ENCODE measurements at regions of chr7 and their contacts with region 1.

Region 1: DNA sequence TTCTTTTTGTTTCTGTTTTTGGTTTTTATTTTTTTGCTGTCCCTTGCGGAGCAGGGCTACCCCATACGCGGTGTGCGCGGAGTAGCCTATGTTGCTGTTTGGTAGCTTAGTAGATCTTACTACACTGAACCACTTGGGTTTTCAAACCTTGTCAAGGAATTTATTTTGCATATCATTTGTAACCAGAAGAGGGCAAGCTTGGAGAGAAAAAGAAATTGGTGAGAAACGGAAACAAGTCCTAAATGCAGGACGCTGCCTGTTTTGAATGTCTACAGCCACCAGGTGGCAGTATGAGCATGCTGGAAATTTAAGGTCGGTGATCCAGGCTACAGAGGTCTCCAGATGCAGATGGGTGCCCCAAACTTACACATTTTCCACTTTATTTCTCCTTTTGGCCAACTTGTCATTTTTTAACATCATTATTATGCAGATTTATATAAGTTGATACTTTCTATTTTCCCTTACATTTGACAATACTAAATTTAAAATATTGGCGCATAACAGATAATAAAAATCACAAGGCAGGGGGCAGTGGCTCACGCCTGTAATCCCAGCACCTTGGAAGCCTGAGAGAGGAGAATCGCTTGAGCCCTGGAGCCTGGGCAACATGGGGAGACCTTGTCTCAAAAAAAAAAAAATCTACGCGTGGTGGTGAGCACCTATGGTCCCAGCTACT is 15.3 kb upstream of the TRA2A start:
- DNase-seq: peak; percentile 88
- ATAC-seq: peak; percentile 87
- H3K4me3 ChIP-seq: no peak overlapping the region
- H3K27ac ChIP-seq: no peak overlapping the region
- H3K4me1 ChIP-seq: peaks cover 4 to 7% of the 10 kb centered on the region in 2 experiments; a peak in 3 of 4 replicates
- H3K27me3 ChIP-seq: no peaks in the 10 kb centered on the region
- CTCF ChIP-seq: peak; percentile 83 to 99 (median 98)
- POLR2A ChIP-seq: no peak
- RAD21 ChIP-seq: peak; percentile 95

Region 2: DNA sequence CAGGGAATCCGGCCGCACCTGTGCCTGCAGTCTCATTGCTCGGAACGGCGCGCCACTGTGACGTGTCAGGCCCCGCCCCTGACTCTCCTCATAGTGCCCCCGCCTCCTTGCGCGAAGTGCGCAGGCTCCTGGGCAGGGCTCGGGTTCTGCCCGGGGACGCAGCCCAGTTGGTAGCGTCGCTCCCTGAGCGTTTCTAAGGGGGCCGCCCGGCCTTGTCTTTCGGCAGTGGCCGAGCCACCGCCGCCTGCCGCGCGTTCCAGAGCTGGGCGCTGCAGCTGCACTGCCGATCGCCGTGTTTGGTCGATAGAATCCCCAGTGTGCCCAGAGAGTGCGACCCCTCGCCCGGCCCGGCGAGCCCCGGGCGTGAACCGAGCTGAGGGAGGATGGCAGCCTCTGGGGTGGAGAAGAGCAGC is 441.4 kb before region 1 on chr7 and contains the start of gene KLHL7:
- CTCF ChIA-PET with region 1: no interaction called
- POLR2A ChIA-PET with region 1: no interaction called
- RAD21 ChIA-PET with region 1: no interaction called
- intact Hi-C with region 1: loop called (anchors 10 kb)
- DNase-seq: peak; percentile 82
- ATAC-seq: peak; percentile 97
- H3K4me3 ChIP-seq: peak within 1 kb of the TSS; percentile 88 to 96
- H3K27ac ChIP-seq: peak within 1 kb of the TSS; percentile 75
- H3K4me1 ChIP-seq: peaks cover 0 to 7% of the 10 kb centered on the region in 2 experiments; a peak in 3 of 4 replicates
- H3K27me3 ChIP-seq: no peaks in the 10 kb centered on the region
- CTCF ChIP-seq: no peak
- POLR2A ChIP-seq: peak; percentile 85
- RAD21 ChIP-seq: no peak
- total RNA-seq, gene KLHL7: 20.6 TPM

Region 3: DNA sequence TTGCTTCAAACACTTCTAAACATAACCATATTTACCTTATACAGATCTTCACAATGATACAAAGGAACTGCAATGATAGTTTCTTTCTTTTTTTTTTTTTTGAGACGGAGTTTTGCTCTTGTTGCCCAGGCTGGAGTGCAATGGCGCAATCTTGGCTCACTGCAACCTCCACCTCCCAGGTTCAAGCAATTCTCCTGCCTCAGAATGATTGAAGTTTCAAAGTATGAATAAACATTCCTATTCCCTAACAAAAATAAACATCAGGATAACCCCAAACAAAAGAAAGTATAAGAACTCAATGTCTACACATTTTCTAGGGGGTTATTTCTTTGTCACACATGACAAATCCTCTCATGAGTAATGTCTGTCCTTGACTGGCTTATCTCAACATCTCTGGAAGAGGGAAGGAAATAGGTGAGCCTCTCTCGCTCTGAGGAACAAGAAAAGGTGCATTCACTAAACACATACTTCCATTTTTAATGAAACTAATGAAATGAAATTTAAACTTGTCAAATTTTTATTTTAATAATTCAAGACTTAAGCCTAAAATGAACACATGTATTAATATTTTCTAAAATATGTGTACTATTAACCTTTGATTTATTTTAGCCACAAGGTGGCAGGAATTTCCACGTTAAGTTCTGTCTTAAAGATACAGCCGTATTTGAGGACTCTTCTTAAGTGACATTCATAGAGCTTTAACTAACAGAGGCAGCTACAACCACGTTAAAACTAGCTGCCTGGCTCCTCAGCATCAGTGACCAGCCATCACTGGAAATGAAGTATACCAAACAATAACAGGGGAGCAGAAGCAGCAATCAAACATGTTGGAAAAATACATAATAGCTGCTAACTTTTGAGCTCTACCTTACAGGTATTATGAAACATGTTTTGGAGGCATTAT is 189.6 kb before region 1 on chr7:
- CTCF ChIA-PET with region 1: interaction called, 13 read pairs
- POLR2A ChIA-PET with region 1: no interaction called
- RAD21 ChIA-PET with region 1: no interaction called
- intact Hi-C with region 1: loop called (anchors 5 kb)
- DNase-seq: peak; percentile 43
- ATAC-seq: peak; percentile 76
- H3K4me3 ChIP-seq: no peak overlapping the region
- H3K27ac ChIP-seq: peak overlapping the region; percentile 64
- H3K4me1 ChIP-seq: peaks cover 68 to 72% of the 10 kb centered on the region in 2 experiments
- H3K27me3 ChIP-seq: no peaks in the 10 kb centered on the region
- CTCF ChIP-seq: peak in 2 of 3 experiments; percentile 58 to 61; a peak in 3 of 6 replicates
- POLR2A ChIP-seq: no peak
- RAD21 ChIP-seq: peak; percentile 78

Region 4: DNA sequence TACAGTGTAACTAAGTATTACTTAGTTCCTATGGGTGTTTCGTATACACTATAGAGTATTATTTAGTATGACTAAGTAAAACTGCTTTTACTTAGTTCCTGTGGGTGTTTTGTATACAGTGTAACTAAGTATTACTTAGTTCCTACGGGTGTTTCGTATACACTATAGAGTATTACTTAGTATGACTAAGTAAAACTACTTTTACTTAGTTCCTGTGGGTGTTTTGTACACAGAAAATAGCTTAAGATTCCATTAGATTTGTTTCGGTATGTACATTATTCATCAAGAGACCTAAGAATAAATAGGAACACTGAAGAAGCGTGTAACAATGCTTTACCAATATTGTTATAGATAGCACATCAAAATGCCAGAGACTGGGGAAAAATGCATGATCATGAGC is 101.7 kb before region 1 on chr7:
- CTCF ChIA-PET with region 1: no interaction called
- POLR2A ChIA-PET with region 1: no interaction called
- RAD21 ChIA-PET with region 1: no interaction called
- intact Hi-C with region 1: no loop called
- DNase-seq: no peak
- ATAC-seq: no peak
- H3K4me3 ChIP-seq: no peak overlapping the region
- H3K27ac ChIP-seq: no peak overlapping the region
- H3K4me1 ChIP-seq: peaks cover 0 to 3% of the 10 kb centered on the region in 2 experiments; a peak in 1 of 4 replicates
- H3K27me3 ChIP-seq: no peaks in the 10 kb centered on the region
- CTCF ChIP-seq: no peak
- POLR2A ChIP-seq: no peak
- RAD21 ChIP-seq: no peak

Region 5: GRCh38 chr7:23531794-23532489 is 15.1 kb before region 1 on chr7 and contains the start of gene TRA2A:
- CTCF ChIA-PET with region 1: interaction called, 16 read pairs
- POLR2A ChIA-PET with region 1: no interaction called
- RAD21 ChIA-PET with region 1: no interaction called
- intact Hi-C with region 1: no loop called
- DNase-seq: peak; percentile 89
- ATAC-seq: peak; percentile 94
- H3K4me3 ChIP-seq: peak within 1 kb of the TSS; percentile 71 to 90
- H3K27ac ChIP-seq: peak within 1 kb of the TSS; percentile 72
- H3K4me1 ChIP-seq: peaks cover 12 to 29% of the 10 kb centered on the region in 2 experiments
- H3K27me3 ChIP-seq: no peaks in the 10 kb centered on the region
- CTCF ChIP-seq: no peak
- POLR2A ChIP-seq: peak; percentile 95
- RAD21 ChIP-seq: no peak
- total RNA-seq, gene TRA2A: 122 TPM

Region 6: GRCh38 chr7:23712368-23713284 is 165.6 kb after region 1 on chr7:
- CTCF ChIA-PET with region 1: interaction called, 27 read pairs
- POLR2A ChIA-PET with region 1: no interaction called
- RAD21 ChIA-PET with region 1: interaction called in 1 of 2 experiments, 3 read pairs
- intact Hi-C with region 1: loop called (anchors 1 kb)
- DNase-seq: peak; percentile 67
- ATAC-seq: peak; percentile 64
- H3K4me3 ChIP-seq: no peak overlapping the region
- H3K27ac ChIP-seq: no peak overlapping the region
- H3K4me1 ChIP-seq: peaks cover 0 to 17% of the 10 kb centered on the region in 2 experiments; a peak in 2 of 4 replicates
- H3K27me3 ChIP-seq: no peaks in the 10 kb centered on the region
- CTCF ChIP-seq: peak; percentile 18 to 96 (median 70); a peak in 5 of 6 replicates
- POLR2A ChIP-seq: no peak
- RAD21 ChIP-seq: peak; percentile 92

Measured in HCT116 (cell line).